ENCODE measurements at regions of chr20 and their contacts with region 1.

Region 1: DNA sequence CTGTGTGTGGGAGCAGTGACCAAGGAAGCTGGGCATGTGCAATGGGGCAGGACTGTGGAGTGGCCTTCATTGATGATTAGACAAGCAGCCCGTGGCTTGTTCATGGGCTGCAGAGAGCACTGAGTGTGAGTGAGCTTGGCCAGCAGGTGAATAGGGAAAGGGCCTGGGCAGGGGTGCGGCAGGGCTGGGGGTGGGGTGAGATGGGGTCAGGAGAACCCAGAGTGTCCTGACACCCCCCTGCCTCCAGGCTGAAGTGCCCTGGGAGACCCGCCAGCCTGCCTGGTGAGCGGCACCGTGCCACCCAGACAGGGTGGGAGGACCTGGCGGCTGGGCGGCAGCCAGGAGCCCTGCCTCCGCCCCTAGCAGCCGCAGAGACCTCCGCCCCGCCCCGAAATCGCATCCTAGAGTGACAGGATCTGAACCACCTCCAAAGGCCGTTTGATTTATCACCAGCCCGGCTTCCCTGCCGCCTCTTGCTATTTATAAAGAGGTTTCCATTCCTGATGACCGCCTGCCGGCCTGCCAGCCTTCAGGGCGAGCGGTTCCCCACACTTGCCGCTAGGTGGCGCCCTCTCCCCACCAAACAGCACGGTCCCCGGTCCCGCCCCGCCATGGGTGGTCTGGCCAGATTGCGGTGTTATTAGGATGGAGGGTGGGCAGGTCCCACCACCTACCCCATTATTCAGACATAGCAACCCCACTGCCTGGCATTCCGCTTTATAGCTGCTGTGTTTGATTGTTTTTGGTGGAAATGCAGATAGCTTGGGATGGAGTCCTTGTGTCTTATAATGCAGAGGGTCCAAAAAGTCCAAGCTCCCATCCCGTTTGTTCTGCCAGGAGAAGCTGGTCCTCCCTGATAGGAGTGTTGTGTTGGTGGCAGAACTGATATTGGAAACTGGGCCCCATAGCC is 3.5 kb downstream of the MYLK2 start:
- DNase-seq: peak; percentile 92
- ATAC-seq: peak; percentile 87

Region 2: DNA sequence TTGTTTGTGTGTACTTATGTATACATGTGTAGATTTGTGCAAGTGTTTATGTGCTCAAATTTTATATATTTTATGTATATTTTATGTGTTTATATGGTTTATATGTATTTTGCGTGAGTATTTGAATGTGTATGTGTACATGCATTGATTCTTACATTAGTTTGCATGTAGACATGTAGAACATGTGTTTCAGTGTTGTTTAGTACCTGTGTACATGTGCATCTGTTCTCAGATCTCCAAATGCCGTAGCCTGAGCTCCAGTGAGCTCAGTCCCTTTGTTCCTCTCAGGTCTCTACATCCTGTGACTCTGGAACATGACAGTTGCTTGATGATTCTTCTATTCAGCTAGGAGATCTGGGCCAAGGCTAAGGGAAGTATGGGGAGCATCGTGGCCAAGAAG is 427.8 kb before region 1 on chr20:
- intact Hi-C with region 1: no loop called
- DNase-seq: no peak
- ATAC-seq: no peak

Region 3: DNA sequence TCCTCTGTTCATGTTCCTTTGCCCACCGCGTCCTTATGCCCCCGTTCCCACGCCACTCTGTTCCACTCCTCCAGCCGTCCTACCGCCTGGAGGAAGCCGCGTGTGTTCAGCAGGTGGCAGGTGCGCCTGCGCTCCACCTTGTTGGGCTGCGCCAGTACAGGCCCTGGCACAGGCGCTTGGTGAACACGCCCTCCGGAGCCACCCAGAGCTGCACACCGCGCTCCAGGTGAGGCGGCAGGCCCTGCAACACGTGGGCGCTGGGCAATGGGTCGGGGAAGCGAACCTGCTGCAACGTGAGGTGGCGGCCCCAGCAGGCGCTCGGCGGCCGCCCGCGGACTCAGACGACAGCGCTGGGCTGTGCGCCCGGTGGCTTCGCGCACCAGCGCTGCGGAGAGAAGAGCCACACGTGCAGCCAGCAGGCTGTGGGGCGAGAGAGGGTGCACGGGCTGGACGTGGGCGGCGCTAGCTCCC is 26.8 kb after region 1 on chr20:
- intact Hi-C with region 1: loop called (anchors 1 kb)
- DNase-seq: no peak
- ATAC-seq: no peak

Region 4: GRCh38 chr20:31951530-31952453 is 129.1 kb after region 1 on chr20 and contains the start of gene PDRG1:
- intact Hi-C with region 1: loop called (anchors 2 kb)
- DNase-seq: peak; percentile 99
- ATAC-seq: peak; percentile 98
- total RNA-seq, gene PDRG1: 11.0 TPM

Region 5: GRCh38 chr20:31987744-31988143 is 165.1 kb after region 1 on chr20:
- intact Hi-C with region 1: no loop called
- DNase-seq: no peak
- ATAC-seq: no peak

Region 6: DNA sequence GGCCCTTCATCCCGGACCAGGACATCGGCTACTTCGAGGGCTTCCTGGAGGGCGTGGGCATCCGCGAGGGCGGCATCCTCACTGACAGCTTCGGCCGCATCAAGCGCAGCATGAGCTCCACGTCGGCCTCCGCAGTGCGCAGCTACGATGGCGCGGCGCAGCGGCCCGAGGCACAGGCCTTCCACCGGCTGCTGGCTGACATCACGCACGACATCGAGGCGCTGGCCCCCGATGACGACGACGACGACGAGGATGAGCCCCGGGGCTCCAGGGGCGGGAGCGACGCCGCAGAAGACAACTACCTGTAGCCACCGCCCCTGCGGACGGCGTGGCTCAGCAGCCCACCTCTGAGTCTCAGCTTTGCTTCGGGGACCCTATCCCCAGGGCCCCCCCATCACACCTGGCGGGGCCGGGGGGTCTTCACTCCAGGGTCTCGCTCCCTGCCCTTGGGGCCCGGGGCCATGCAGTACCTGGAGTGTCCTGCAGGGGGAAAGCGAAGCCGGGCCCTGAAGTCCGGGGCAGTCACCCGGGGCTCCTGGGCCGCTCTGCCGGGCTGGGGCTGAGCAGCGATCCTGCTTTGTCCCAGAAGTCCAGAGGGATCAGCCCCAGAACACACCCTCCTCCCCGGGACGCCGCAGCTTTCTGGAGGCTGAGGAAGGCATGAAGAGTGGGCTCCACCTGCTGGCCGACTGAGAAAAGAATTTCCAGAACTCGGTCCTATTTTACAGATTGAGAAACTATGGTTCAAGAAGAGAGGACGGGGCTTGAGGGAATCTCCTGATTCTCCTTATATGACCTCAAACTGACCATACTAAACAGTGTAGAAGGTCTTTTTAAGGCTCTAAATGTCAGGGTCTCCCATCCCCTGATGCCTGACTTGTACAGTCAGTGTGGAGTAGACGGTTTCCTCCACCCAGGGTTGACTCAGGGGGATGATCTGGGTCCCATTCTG is 208.6 kb after region 1 on chr20:
- intact Hi-C with region 1: loop called (anchors 2 kb)
- DNase-seq: peak; percentile 83
- ATAC-seq: peak; percentile 82

Region 7: GRCh38 chr20:32091888-32092346 is 269.2 kb after region 1 on chr20:
- intact Hi-C with region 1: loop called (anchors 2 kb)
- DNase-seq: peak; percentile 88
- ATAC-seq: peak; percentile 57

Region 8: GRCh38 chr20:32652739-32653526 is 830.3 kb after region 1 on chr20:
- intact Hi-C with region 1: loop called (anchors 10 kb)
- DNase-seq: peak; percentile 90
- ATAC-seq: peak; percentile 96

Measured in Right ventricle myocardium inferior (tissue), 1 donor.